ENCODE measurements at regions of chr6 and their contacts with region 1.

Region 1: GRCh38 chr6:33407132-33407718 is 3.6 kb upstream of the PHF1 start:
- DNase-seq: peak; percentile 60

Region 2: DNA sequence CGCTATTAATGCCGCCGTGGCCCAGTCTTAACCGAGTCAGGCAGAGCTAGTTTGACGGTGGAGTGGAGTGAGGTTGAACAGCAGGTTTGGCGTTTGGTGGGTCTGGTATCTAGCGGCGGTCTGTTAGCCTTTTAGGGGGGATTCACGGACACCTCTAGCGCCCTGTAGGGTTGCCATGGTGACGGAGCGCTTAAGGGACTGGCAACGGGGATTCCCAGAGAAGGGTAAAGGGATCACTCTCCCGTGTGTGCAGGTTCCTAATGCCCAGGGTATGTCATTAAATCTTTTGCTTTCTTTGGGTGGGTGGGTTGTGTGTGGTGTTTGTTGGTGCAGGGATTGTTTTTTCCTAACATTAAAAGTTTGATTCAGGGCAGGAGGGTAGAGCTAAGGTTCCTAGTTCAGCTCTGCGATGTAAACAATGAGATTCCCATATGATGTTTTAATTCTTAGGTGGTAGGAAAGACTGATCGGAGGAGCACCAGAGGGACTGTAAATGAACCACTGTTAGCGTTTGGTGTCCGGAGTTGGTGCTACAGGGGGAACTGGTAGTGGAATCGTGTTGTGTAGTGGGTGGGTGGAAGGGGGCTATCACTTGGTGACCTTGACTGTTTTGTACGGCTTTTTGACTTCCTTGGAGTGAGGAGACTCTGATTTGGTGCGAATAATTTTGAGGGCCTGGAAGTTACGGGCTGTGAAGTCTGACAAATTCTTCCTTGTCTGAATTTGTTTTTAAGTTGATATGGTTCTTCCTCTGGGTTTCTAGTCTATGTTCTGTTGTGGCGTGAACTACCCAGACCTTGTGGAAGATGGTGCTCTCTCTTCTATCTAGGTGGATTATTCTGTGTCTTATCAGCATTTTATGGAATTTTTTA is 433.8 kb before region 1 on chr6:
- in situ Hi-C with region 1: no loop called
- DNase-seq: peak; percentile 50

Region 3: GRCh38 chr6:33271458-33272274 is 135.6 kb before region 1 on chr6 and contains the starts of genes RPS18 and VPS52:
- in situ Hi-C with region 1: loop called (anchors 10 kb)
- DNase-seq: peak; percentile 99